ENCODE measurements at regions of chr16 and their contacts with region 1.

Region 1: GRCh38 chr16:68512183-68512582 is 26.9 kb upstream of the ZFP90 start:
- DNase-seq: no peak
- H3K4me3 ChIP-seq: no peak overlapping the region
- CTCF ChIP-seq: no peak

Region 2: GRCh38 chr16:68257906-68258800 is 254.0 kb before region 1 on chr16:
- CTCF ChIA-PET with region 1: interaction called, 13 read pairs
- POLR2A ChIA-PET with region 1: no interaction called
- DNase-seq: peak; percentile 31
- H3K4me3 ChIP-seq: no peak overlapping the region
- CTCF ChIP-seq: no peak

Region 3: DNA sequence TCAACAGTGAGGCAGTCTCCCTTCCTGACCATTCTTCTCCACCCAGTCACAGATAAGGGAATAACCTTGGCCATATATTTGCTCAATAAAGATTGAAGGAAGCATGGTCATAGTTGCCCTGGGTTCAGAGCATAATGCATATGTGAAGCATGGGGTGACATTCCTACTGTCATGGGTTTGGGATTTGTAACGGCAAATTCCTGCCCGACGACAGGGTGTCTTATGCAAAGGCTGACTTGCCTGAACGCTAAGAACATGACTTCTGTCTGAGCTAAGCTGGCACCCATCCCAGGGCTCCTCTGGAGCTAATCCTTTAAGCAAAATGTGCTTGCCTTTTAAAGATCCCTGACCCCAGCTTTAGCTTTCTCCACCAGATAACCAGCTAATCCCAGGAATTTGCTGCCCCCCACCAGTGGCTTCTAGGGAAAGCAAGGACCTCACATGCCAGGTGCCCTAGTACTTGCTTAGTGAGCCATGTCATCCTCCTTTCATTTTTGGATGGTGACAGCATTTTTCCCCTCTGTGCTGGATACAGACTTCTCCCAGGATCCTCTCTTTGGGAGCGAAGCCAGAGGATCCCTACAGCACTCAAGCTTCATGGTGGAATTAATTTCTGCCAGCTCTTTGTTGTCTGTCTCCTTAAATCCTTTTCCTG is 213.1 kb before region 1 on chr16:
- CTCF ChIA-PET with region 1: no interaction called
- POLR2A ChIA-PET with region 1: no interaction called
- DNase-seq: peak; percentile 46
- H3K4me3 ChIP-seq: no peak overlapping the region
- CTCF ChIP-seq: no peak

Region 4: DNA sequence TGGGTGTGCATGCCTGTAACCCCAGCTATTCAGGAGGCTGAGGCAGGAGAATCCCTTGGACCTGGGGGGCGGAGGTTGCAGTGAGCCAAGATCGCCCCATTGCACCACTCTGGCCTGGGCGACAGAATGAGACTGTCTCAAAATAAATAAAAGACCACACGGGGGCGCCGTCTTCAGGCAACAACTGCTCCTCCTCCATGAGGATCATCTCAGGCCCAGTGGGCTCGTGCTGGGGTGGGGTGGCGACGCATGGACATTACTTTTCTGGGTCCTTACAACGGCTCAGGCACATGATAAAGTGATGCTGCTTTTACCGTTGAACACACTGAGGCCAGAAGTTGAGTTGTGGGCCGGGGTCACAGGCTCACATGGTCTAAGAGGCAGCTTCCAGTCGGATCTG is 145.2 kb before region 1 on chr16:
- CTCF ChIA-PET with region 1: interaction called, 46 read pairs
- POLR2A ChIA-PET with region 1: no interaction called
- DNase-seq: no peak
- H3K4me3 ChIP-seq: no peak overlapping the region
- CTCF ChIP-seq: peak; percentile 20

Region 5: GRCh38 chr16:68406451-68407152 is 105.6 kb before region 1 on chr16:
- CTCF ChIA-PET with region 1: interaction called, 230 read pairs
- POLR2A ChIA-PET with region 1: no interaction called
- DNase-seq: peak; percentile 12
- H3K4me3 ChIP-seq: peak overlapping the region; percentile 36
- CTCF ChIP-seq: no peak

Region 6: DNA sequence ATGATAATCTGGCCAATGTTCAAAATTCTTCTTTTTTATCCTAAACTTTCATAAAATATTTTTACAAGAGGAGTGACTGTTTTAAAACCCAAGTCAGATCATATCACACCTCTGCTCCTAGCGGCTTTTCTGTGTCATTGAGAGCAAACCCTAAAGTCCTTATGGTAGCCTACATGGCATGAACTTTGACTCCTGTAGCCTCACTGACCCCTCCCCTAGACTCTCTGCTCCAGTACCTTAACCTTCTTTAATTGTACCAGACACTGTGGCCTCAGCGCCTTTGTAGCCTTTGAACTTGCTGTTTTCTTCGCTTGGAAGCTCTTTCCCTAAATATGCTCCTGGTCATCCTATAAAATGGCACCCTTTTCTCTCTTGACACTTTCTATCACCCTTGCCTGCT is 56.6 kb before region 1 on chr16:
- CTCF ChIA-PET with region 1: interaction called, 10 read pairs
- POLR2A ChIA-PET with region 1: no interaction called
- DNase-seq: no peak
- H3K4me3 ChIP-seq: no peak overlapping the region
- CTCF ChIP-seq: no peak

Region 7: DNA sequence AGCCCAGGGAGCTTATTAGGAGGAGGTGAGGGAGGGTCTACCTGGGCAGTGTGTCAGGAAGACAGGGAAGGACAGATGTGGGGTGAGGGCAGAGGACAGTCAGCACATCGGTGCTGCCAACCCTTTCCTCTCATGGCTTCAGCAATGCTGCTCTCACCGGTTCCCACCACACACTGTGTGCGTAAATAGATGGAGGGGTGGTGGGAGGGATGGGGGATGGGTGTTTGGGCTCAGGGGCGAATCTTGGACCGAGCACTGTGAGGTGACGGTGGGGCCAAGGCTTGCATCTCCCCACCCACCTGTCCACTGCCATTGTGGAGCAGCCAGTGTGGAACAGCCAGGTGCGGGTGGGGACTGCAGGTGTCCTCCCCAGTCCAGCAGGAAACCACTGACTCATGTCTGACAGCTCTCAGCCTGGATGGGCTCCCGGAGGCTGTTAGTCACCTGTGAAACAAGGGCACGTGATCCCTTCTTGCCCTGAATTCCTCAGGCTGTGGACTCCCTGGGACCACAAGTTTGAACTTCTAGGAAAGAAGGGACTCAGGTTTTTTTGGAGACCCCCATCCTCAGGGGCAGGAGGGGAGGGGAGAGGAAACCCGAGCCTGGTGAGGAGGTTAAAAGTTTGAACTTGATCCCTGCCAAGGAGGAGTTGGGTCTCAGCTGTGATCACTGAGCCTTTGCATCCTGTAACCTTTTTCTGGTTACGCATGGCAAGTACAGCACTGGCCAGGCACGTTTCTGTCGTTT is 21.2 kb before region 1 on chr16:
- CTCF ChIA-PET with region 1: interaction called, 11 read pairs
- POLR2A ChIA-PET with region 1: no interaction called
- DNase-seq: no peak
- H3K4me3 ChIP-seq: no peak overlapping the region
- CTCF ChIP-seq: no peak

Region 8: DNA sequence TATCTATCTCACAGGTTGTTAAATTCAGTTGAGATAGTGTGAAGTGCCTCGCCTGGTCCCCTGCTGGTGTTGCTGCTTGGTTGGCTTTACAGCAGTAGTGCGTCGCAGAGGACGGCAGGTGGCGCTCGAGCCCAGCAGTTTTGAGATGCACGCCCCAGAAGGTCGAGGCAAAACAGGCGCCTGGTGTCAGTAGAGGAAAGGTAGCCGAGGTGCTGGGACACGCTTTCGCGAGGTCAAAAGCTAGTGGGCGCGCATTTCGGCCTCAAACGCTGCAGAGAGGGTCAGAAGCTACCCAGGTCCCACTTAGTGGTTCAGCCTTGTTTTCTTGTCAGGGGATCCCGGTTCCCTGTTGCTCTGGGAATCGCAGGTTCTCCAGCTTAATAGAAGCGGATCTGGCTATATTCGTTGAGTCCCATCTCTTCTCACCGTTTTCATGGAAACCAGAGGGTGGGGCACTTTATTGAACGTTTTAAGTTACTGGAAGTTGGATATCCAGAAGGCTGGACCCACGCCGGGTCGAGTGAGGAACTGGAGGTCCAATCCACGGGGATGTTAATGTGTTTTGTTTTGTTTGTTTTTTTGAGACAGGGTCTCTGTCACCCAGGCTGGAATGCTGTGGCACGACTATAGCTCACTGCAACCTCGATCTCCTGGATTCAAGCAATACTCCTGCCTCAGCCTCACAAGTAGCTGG is 16.6 kb after region 1 on chr16:
- CTCF ChIA-PET with region 1: interaction called, 88 read pairs
- POLR2A ChIA-PET with region 1: no interaction called
- DNase-seq: no peak
- H3K4me3 ChIP-seq: peak overlapping the region; percentile 32
- CTCF ChIP-seq: peak; percentile 97

Measured in AG04449 (cell line).